Activated CD4-positive, alpha-beta memory T cell treated with anti-CD3 and anti-CD28 coated beads for 36 hours (primary cell): ENCODE measurements at regions of chr15 and their contacts with region 1.

Region 1: DNA sequence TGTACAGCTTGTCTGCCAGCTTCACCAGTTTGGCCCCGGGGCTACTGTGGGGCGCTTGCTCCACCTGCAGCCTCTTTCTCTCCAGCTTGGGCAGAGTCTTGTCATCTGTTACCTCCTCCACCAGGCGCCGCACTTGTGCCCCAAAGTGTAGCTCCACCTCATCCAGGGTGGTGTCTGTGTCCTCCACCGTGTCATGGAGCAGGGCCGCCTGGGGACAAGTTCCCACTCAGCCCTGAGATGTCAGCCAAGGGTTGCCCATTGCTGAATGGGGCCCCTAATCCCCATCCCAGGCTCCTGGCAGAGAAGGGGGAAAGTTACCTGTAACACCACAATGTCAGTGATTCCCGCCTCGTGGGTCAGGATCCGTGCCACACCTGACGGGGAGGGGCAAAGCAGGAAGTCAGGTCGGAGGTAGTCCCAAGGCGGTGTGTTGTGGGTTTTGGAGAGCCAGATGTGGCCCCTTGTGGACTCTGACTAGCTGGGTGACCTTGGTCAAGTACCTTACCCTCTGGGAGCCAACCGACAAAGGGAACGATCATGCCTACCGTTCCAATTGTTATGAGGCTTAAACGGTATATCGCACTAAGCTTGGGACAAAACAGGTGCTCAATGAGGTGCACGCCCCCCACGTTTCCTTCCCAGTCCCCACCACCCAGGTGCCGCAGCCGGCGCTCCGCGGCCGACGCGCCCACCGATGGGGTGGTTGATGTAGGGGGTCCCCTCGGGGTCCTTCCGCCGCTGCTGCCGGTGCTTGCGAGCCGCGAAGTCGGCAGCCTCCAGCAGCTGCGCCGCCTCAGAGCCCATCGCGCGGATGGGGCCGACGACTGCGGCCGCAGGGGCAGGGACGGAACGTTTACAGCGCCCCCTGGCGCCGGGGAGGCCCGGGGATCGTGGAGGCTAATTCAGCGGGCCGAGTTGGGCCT is at the start of gene HDDC3:
- DNase-seq: peak; percentile 93
- H3K4me3 Mint-ChIP-seq: peak within 1 kb of the TSS; percentile 99
- H3K27ac Mint-ChIP-seq: peak within 1 kb of the TSS; percentile 100
- H3K4me1 Mint-ChIP-seq: peaks cover 47% of the 10 kb centered on the region
- H3K27me3 Mint-ChIP-seq: no peaks in the 10 kb centered on the region
- total RNA-seq, gene HDDC3: 45.0 to 45.8 TPM

Region 2: GRCh38 chr15:90387537-90388461 is 544.2 kb before region 1 on chr15 and contains the start of gene IQGAP1:
- CTCF ChIA-PET with region 1: no interaction called
- POLR2A ChIA-PET with region 1: no interaction called
- intact Hi-C with region 1: loop called (anchors 5 kb)
- DNase-seq: peak; percentile 98
- H3K4me3 Mint-ChIP-seq: peak within 1 kb of the TSS; percentile 92
- H3K27ac Mint-ChIP-seq: peak within 1 kb of the TSS; percentile 91
- H3K4me1 Mint-ChIP-seq: peaks cover 46% of the 10 kb centered on the region
- H3K27me3 Mint-ChIP-seq: no peaks in the 10 kb centered on the region
- total RNA-seq, gene IQGAP1: 186 to 207 TPM

Region 3: DNA sequence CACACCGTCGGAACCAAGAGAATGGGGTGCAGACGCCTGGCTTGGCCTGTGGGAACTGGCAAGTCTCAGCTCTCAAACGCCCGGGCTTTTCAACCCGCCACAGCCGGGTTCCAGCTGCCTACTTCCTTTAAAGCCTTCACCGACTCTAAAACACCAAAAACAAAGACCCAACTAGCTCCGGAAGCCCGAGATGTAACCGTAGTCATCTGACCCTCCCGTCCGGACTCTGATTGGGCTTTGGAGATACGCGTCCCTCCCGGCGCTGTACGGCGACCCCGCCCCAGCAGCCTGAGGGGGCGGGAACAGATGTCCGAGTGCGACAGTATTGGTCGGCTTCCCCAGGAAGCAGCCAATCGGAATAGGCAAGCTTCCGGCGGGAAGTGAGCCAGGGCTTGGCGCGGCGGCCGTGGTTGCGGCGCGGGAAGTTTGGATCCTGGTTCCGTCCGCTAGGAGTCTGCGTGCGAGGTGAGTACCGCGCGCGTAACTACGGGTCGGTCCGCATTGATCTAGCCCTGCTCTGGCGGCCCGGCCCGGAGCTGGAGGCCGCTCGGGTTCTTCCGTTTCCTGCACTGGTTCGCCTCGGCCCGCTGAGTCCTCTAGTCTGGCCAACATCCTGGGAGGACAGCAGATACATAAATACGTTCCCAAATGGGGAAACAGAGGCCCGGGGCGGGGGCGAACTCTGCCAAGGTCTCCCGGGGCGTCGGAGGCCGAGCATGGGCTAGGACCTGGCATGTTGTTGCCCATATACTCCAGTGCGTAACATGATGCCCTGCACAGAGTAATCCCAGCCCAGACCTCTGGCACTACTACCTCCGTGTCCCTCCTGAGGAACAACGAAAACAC is 214.8 kb before region 1 on chr15 and contains the start of gene BLM:
- CTCF ChIA-PET with region 1: interaction called, 25 read pairs
- POLR2A ChIA-PET with region 1: interaction called, 5 read pairs
- intact Hi-C with region 1: loop called (anchors 2 kb)
- DNase-seq: peak; percentile 97
- H3K4me3 Mint-ChIP-seq: peak within 1 kb of the TSS; percentile 84
- H3K27ac Mint-ChIP-seq: peak within 1 kb of the TSS; percentile 91
- H3K4me1 Mint-ChIP-seq: peaks cover 24% of the 10 kb centered on the region
- H3K27me3 Mint-ChIP-seq: no peaks in the 10 kb centered on the region
- total RNA-seq, gene BLM: 65.6 to 68.7 TPM

Region 4: GRCh38 chr15:90886041-90886614 is 45.9 kb before region 1 on chr15:
- CTCF ChIA-PET with region 1: interaction called, 41 read pairs
- POLR2A ChIA-PET with region 1: no interaction called
- intact Hi-C with region 1: no loop called
- DNase-seq: peak; percentile 86
- H3K4me3 Mint-ChIP-seq: peak overlapping the region; percentile 26
- H3K27ac Mint-ChIP-seq: peak overlapping the region; percentile 18
- H3K4me1 Mint-ChIP-seq: peaks cover 20% of the 10 kb centered on the region
- H3K27me3 Mint-ChIP-seq: peaks cover 6% of the 10 kb centered on the region

Region 5: DNA sequence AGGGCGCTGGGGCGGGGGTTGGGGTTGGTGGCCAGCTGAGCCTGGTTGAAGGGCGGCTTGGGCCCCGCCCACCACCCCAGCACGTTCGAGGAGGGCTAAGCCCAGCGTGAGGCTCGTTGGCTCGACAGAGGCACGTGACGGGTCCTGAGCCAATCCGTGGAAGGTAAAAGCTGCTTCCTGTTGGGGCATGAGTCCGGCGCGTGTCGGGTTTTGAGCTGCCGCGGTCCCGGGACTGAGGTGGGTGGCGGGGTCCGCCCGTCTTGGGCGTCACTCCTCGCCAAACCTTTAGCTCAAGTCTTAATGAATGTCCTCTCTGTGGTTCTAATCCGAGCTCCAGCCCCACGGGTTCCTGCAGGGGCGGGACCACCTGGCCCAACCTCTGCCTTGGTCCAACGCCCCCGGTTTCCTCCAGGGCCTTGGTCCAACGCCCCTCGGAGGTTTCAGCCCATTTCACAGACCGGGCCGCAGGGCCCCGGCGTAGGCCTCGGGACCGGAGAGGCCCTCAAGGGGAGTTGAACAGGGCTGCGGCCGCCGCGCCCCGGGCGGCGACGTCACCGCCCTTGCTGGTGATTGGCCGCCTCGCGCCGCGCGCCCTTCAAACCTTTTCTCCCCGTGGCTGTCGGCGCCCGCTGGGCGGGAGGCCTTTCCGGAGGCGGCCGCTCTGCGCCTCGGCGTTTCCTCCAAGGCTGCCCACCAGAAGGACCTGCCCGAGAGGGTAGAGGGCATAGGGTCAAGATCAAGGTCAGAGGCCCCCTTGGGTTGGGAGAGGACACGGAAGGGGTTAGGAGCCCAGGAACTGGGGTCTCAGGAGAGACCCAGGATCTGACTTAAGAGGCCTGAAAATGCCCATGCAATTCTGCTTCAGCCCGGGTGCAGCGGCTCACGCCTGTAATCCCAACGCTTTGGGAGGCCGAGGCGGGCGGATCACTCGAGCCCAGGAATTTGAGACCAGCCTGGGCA is 23.0 kb after region 1 on chr15 and contains the start of gene RCCD1:
- CTCF ChIA-PET with region 1: interaction called, 106 read pairs
- POLR2A ChIA-PET with region 1: interaction called, 28 read pairs
- intact Hi-C with region 1: loop called (anchors 1 kb)
- DNase-seq: peak; percentile 96
- H3K4me3 Mint-ChIP-seq: peak within 1 kb of the TSS; percentile 87
- H3K27ac Mint-ChIP-seq: peak within 1 kb of the TSS; percentile 94
- H3K4me1 Mint-ChIP-seq: peaks cover 14% of the 10 kb centered on the region
- H3K27me3 Mint-ChIP-seq: no peaks in the 10 kb centered on the region
- total RNA-seq, gene RCCD1: 39.9 to 41.4 TPM

Region 6: DNA sequence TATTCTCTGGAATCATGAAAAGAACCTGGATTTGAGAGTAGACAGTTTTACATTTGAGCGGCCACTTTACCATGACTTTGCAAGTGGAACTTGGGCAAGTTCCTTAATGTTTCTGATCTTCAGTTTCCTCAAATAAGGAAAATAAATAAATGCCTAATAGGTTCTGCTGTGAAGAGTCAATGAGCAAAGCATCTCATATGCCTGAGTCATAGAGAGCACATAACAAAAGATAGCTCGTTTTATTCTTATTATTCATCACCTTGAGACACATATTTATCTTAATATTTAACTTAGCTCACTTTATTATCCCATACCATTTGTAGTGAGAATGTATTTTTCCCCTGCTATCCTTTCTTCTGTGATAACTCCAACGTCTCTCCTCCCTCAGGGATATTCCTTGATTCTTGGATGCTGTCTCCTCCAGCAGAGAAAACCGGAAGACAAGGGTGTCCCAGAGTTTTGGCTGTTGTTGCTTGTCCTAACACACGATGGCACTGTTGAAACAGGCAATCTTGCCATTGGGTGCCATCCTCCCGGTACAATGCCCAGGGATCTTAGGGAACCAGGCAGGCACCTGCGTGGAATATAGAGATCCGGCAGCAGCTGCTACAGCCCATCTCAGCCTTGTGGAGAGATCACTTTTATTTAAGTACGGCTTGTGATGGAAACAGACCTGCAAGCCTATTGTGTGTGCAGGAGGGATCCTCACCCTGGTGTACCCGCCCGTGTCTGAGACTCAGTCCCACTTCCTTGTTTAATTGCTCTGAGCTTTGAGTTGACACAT is 123.7 kb after region 1 on chr15:
- CTCF ChIA-PET with region 1: interaction called, 10 read pairs
- POLR2A ChIA-PET with region 1: no interaction called
- intact Hi-C with region 1: no loop called
- DNase-seq: peak; percentile 49
- H3K4me3 Mint-ChIP-seq: no peak overlapping the region
- H3K27ac Mint-ChIP-seq: no peak overlapping the region
- H3K4me1 Mint-ChIP-seq: no peaks in the 10 kb centered on the region
- H3K27me3 Mint-ChIP-seq: peaks cover 42% of the 10 kb centered on the region